Panc1 (cell line): ENCODE measurements at regions of chr11 and their contacts with region 1.

Region 1: GRCh38 chr11:2420502-2421225 is 20.1 kb downstream of the TSSC4 start:
- DNase-seq: no peak
- ATAC-seq: peak; percentile 96
- H3K4me3 ChIP-seq: peak overlapping the region; percentile 3 to 42; a peak in 2 of 4 replicates
- H3K27ac ChIP-seq: peak overlapping the region; percentile 23; the same call in 1 of the 2 replicates
- H3K4me1 ChIP-seq: peaks cover 7% of the 10 kb centered on the region; the same call in 1 of the 2 replicates
- H3K27me3 ChIP-seq: no peaks in the 10 kb centered on the region
- CTCF ChIP-seq: peak; percentile 99

Region 2: DNA sequence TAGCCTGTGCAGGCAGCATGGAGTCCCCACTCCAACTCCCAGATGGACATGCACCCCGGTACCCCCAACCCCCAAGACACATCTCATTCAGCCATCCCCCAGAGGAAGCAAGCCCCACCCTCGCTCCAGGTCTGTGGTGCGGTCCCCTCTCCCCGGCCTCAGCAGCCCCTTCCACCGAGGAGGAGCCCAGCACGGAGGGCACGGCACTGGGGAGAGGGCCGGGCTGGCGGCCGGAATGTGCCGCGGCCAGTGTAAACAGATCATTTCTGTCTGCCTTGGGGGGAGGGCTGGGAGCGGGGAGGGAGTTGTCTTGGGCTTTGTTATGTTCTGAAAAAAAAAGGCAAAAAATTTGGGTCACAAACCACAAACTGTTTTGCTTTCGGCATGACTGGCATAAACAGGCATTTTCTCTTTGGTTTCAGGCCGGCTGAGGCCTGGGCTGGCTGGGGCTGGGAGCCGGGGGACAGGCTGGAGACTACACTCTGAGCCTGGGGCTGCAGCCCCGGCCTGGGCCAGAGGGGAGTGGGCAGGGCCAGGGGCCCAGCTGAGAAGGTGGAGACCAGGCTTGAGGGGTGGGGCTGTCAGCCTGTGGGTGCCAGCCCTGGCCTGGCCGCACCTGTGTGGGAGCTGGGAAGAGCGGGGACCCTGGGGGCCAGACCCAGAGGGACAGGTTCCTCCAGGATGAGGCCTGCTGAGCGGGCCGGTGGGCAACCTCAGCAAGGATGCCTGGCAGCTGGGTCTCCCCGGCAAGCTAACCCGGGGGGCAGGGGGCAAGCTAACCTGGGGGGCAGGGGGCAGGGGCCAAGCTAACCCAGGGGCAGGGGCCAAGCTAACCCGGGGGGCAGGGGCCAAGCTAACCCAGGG is 298.2 kb before region 1 on chr11:
- CTCF ChIA-PET with region 1: no interaction called
- POLR2A ChIA-PET with region 1: no interaction called
- in situ Hi-C with region 1: no loop called
- intact Hi-C with region 1: no loop called
- DNase-seq: no peak
- ATAC-seq: no peak
- H3K4me3 ChIP-seq: no peak overlapping the region
- H3K27ac ChIP-seq: no peak overlapping the region
- H3K4me1 ChIP-seq: no peaks in the 10 kb centered on the region
- H3K27me3 ChIP-seq: peaks cover 2% of the 10 kb centered on the region; the same call in 1 of the 2 replicates
- CTCF ChIP-seq: no peak

Region 3: GRCh38 chr11:2196970-2197770 is 223.5 kb before region 1 on chr11:
- CTCF ChIA-PET with region 1: interaction called, 10 read pairs
- POLR2A ChIA-PET with region 1: no interaction called
- in situ Hi-C with region 1: no loop called
- intact Hi-C with region 1: loop called (anchors 2 kb)
- DNase-seq: peak; percentile 24
- ATAC-seq: peak; percentile 90
- H3K4me3 ChIP-seq: no peak overlapping the region
- H3K27ac ChIP-seq: no peak overlapping the region
- H3K4me1 ChIP-seq: peaks cover 4% of the 10 kb centered on the region; the same call in 1 of the 2 replicates
- H3K27me3 ChIP-seq: peaks cover 4% of the 10 kb centered on the region; the same call in 1 of the 2 replicates
- CTCF ChIP-seq: peak; percentile 100

Region 4: DNA sequence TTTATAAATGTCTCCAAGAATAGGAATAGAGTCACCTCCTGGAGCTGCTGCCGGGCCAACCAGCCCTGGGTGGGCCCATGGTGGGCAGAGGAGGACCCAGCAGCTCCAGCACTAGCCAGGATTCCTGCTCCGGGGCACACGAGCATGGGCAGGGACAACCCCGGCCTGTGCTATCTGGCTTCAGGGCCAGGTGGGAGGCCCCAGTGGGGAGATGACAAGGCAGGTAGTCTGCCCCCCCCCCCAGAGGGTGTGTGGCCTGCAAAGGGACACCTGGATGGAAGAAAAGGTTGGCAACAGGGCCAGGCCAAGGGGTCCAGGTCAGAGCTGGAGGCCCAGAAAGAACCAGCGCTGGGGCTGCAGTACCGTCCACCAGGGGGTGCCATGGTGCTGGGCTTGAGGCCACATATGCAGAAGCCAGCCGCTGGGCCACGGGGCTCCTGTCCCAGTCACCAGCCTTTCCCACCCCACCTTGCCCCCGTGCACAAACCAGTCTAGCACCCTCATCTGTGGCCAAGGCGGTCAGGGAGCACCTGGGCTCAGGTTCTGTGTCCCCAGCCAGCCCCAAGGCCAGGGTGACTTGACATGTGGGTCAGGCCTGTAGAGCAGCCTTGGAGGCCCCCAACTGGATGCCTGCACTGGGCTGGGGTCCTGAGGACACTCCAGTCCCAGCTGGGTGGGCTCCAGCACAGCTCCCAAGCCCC is 115.4 kb before region 1 on chr11:
- CTCF ChIA-PET with region 1: interaction called, 102 read pairs
- POLR2A ChIA-PET with region 1: interaction called, 3 read pairs
- in situ Hi-C with region 1: no loop called
- intact Hi-C with region 1: loop called (anchors 1 kb)
- DNase-seq: peak; percentile 35
- ATAC-seq: peak; percentile 88
- H3K4me3 ChIP-seq: no peak overlapping the region
- H3K27ac ChIP-seq: no peak overlapping the region
- H3K4me1 ChIP-seq: no peaks in the 10 kb centered on the region
- H3K27me3 ChIP-seq: no peaks in the 10 kb centered on the region
- CTCF ChIP-seq: peak; percentile 99

Region 5: GRCh38 chr11:2317354-2318050 is 103.2 kb before region 1 on chr11:
- CTCF ChIA-PET with region 1: no interaction called
- POLR2A ChIA-PET with region 1: no interaction called
- in situ Hi-C with region 1: no loop called
- intact Hi-C with region 1: no loop called
- DNase-seq: no peak
- ATAC-seq: no peak
- H3K4me3 ChIP-seq: no peak overlapping the region
- H3K27ac ChIP-seq: no peak overlapping the region
- H3K4me1 ChIP-seq: peaks cover 13% of the 10 kb centered on the region
- H3K27me3 ChIP-seq: no peaks in the 10 kb centered on the region
- CTCF ChIP-seq: no peak

Region 6: DNA sequence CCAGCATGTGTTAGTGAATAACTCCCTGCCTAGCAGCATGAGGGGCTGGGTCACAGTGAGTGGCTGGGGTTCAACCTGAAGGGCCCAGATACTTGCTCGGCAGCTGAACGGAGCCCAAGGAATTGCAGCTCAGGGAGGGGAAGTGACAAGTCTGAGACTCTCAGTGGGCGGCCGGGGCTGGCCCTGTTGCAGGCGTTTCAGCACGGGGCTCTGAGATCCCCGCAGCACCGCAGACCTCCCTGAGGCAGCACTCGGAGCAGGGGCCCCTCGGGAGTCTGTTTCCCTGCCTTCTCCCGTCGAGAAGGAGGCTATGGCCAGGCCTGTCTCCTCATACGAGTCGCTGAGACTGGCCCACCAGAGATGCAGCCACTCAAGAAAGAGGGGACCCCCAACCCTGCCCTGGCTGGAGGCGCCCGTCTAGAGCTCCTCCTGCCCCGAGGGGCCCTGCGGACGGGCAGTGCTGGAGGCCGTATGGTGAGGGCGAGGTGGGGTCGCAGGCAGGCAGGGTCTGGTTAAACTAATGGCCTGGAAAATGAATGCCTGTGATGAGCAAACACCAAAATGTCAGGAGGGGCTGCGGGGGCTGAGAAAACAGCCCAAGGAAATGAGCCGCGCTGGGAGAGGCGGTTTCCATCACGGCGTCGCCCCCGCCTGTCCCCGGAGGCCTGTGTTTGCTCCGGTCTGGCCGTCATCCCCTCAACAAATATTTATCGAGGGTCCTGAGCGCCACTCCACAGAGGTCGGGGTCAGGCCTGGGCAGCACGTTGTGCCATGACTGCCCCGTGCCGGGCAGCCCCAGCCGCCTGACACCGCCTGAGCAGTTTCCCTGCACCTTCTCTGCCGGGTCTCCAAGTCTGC is 10.8 kb before region 1 on chr11:
- CTCF ChIA-PET with region 1: interaction called, 15 read pairs
- POLR2A ChIA-PET with region 1: no interaction called
- in situ Hi-C with region 1: no loop called
- intact Hi-C with region 1: no loop called
- DNase-seq: no peak
- ATAC-seq: no peak
- H3K4me3 ChIP-seq: no peak overlapping the region
- H3K27ac ChIP-seq: no peak overlapping the region
- H3K4me1 ChIP-seq: no peaks in the 10 kb centered on the region
- H3K27me3 ChIP-seq: no peaks in the 10 kb centered on the region
- CTCF ChIP-seq: no peak